ENCODE measurements at regions of chr5 and their contacts with region 1.

Region 1: GRCh38 chr5:72268753-72269410 is 51.2 kb downstream of the MRPS27 start:
- DNase-seq: peak; percentile 20 to 41 (median 39)
- H3K4me3 ChIP-seq: no peak overlapping the region
- H3K4me3 Mint-ChIP-seq: no peak overlapping the region
- H3K27ac ChIP-seq: no peak overlapping the region
- H3K27ac Mint-ChIP-seq: peak overlapping the region in 1 of 7 donors; percentile 3
- H3K4me1 ChIP-seq: no peaks in the 10 kb centered on the region
- H3K4me1 Mint-ChIP-seq: peaks cover 5 to 8% (median 6%) of the 10 kb centered on the region in 4 donors
- H3K27me3 ChIP-seq: no peaks in the 10 kb centered on the region
- H3K27me3 Mint-ChIP-seq: no peaks in the 10 kb centered on the region

Region 2: GRCh38 chr5:71955723-71956122 is 313.2 kb before region 1 on chr5:
- CTCF ChIA-PET with region 1: no interaction called
- POLR2A ChIA-PET with region 1: no interaction called
- intact Hi-C with region 1: no loop called
- DNase-seq: no peak
- H3K4me3 ChIP-seq: no peak overlapping the region
- H3K4me3 Mint-ChIP-seq: no peak overlapping the region
- H3K27ac ChIP-seq: no peak overlapping the region
- H3K27ac Mint-ChIP-seq: no peak overlapping the region
- H3K4me1 ChIP-seq: no peaks in the 10 kb centered on the region
- H3K4me1 Mint-ChIP-seq: no peaks in the 10 kb centered on the region
- H3K27me3 ChIP-seq: no peaks in the 10 kb centered on the region
- H3K27me3 Mint-ChIP-seq: peaks cover 9 to 16% of the 10 kb centered on the region in 2 donors

Region 3: GRCh38 chr5:72234265-72234700 is 34.6 kb before region 1 on chr5:
- CTCF ChIA-PET with region 1: no interaction called
- POLR2A ChIA-PET with region 1: no interaction called
- intact Hi-C with region 1: loop called (anchors 2 kb)
- DNase-seq: peak; percentile 64 to 71 (median 67)
- H3K4me3 ChIP-seq: no peak overlapping the region
- H3K4me3 Mint-ChIP-seq: peak overlapping the region in 5 of 8 donors; percentile 13 to 70 (median 41)
- H3K27ac ChIP-seq: no peak overlapping the region
- H3K27ac Mint-ChIP-seq: peak overlapping the region in 3 of 7 donors; percentile 6 to 62 (median 20)
- H3K4me1 ChIP-seq: peaks cover 45% of the 10 kb centered on the region
- H3K4me1 Mint-ChIP-seq: peaks cover 31 to 47% (median 39%) of the 10 kb centered on the region in 4 donors
- H3K27me3 ChIP-seq: no peaks in the 10 kb centered on the region
- H3K27me3 Mint-ChIP-seq: no peaks in the 10 kb centered on the region

Region 4: DNA sequence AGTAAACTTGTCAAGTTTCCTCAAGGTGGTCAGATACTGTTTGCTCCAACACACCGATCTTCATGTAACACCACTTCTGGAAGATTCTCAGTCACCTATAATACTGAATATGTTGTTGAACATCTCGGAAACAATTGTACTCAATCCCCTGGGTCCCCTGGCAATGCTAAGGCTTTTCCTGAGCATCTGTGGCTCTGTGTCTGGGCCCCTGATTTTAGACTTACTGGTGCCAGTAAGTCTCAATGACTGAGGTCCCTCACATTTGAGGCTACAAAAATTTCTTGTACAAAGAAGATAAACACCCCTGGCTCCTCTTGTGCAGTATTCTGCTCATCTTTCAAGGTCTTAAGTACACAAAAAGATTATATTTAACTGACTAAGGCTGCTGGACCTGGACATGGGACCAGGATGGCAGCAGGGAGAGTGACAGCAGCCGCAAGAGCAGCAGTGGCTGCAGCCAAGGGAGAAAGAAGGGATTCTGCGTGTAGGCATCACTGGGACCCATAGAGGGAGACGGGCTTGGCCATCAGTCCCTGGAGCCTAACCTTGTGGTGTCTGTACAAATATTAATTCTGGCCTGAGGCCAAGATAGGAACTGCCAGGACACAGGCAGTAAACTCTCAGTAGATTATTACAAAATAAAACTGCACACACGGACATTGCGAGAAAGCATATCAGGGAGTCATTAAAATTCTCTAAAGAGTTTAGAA is 498.6 kb after region 1 on chr5:
- CTCF ChIA-PET with region 1: no interaction called
- POLR2A ChIA-PET with region 1: no interaction called
- intact Hi-C with region 1: no loop called
- DNase-seq: no peak
- H3K4me3 ChIP-seq: no peak overlapping the region
- H3K4me3 Mint-ChIP-seq: no peak overlapping the region
- H3K27ac ChIP-seq: no peak overlapping the region
- H3K27ac Mint-ChIP-seq: no peak overlapping the region
- H3K4me1 ChIP-seq: no peaks in the 10 kb centered on the region
- H3K4me1 Mint-ChIP-seq: no peaks in the 10 kb centered on the region
- H3K27me3 ChIP-seq: no peaks in the 10 kb centered on the region
- H3K27me3 Mint-ChIP-seq: peaks cover 4 to 5% of the 10 kb centered on the region in 2 donors